Prostate gland (tissue), 2 donors: ENCODE measurements at regions of chr14 and their contacts with region 1.

Region 1: GRCh38 chr14:96362965-96363756 is at the starts of genes ATG2B and GSKIP:
- DNase-seq: peak; percentile 94
- H3K4me3 ChIP-seq: peak within 1 kb of the TSS; percentile 97 to 98
- H3K27ac ChIP-seq: peak within 1 kb of the TSS; percentile 95 to 98
- H3K4me1 ChIP-seq: peaks cover 4% of the 10 kb centered on the region
- H3K27me3 ChIP-seq: no peaks in the 10 kb centered on the region
- CTCF ChIP-seq: peak in 2 of 4 experiments; percentile 8 to 11
- POLR2A ChIP-seq: peak; percentile 73
- total RNA-seq, gene ATG2B: 24.5 to 43.3 TPM
- total RNA-seq, gene GSKIP: 10.7 to 28.9 TPM

Region 2: DNA sequence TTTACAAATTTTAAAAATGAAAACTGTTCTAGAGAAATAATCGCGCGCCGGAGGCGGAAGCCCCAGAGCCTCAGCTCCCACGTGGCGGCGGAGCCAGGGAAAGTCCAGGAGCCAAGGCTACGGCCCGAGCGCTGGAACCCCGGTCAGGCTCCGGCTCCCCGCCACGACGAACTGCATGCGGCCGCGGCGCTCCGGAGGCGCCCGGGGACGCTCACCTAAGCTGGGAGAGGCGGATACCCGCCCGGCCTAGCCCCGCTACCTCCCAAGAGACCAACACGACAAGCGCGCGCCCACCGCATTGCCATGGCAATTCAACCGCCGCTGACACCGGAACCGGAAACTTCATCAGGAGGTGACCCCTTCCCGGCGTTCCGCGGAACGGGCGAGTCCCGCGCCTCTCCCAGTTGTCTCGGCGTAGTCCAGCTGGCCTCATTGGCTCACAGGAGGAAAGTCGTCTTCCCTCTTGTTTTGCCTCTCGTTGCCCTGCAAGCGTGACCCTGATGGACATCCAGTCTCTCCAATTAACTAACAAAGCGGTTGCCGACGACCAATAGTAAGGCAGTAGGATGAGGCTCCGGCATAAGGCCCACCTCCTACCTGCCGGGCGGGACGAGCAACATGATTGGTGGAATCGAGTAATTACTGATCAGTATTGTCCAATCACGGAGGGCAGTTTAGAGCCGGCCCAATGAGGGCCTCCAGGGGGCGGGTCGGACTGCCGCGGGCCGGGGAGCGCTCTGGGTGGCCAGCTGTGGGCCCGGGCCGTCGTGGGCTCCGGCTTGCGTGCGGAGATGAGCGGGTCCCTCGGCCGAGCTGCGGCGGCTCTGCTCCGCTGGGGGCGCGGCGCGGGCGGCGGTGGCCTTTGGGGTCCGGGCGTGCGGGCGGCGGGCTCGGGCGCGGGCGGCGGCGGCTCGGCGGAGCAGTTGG is 828.6 kb before region 1 on chr14 and contains the start of gene GLRX5:
- intact Hi-C with region 1: loop called (anchors 10 kb)
- DNase-seq: peak; percentile 100
- H3K4me3 ChIP-seq: peak within 1 kb of the TSS; percentile 90 to 93
- H3K27ac ChIP-seq: peak within 1 kb of the TSS; percentile 79 to 82
- H3K4me1 ChIP-seq: peaks cover 11% of the 10 kb centered on the region
- H3K27me3 ChIP-seq: no peaks in the 10 kb centered on the region
- CTCF ChIP-seq: peak in 3 of 4 experiments; percentile 18 to 65 (median 51)
- POLR2A ChIP-seq: peak; percentile 23
- total RNA-seq, gene GLRX5: 56.2 to 93.0 TPM